HepG2 (cell line): ENCODE measurements at regions of chr12 and their contacts with region 1.

Region 1: DNA sequence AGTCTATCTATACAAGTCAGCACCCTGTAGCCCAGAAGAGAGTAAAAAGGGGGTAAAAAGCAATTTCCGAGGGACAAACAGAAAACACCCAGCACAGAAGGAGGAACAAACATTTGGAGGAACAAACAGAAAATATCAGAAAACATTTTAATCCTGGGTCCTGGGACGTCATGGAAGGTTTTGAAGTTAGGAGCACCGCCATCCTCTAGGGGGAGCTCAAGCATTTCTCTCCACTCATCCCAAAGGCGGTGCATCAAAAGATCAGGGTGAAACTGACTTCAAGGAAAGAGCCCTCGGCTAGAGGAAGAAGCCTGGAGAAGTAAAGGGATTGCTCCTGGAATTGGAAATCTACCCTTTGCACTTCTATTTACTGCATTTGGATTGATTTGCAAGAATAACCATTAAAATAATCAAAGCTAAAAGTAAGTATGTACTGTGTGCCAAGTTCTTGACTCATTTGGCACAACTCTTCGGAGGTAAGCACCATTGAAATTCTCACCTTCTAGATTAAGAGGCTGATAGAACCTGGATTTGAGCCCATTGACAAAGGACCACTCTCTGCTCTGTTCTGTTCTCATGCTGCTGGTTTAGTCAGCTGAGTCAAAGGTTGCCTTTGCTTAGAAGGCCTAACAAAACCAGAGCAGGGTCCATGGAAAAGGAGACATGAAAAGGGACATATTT is 17.2 kb upstream of the POC1B start:
- DNase-seq: peak; percentile 73
- ATAC-seq: peak; percentile 86
- H3K4me3 ChIP-seq: no peak overlapping the region
- H3K27ac ChIP-seq: no peak overlapping the region
- H3K4me1 ChIP-seq: peaks cover 23% of the 10 kb centered on the region
- H3K27me3 ChIP-seq: no peaks in the 10 kb centered on the region
- CTCF ChIP-seq: peak; percentile 87
- EP300 ChIP-seq: no peak
- POLR2A ChIP-seq: no peak
- RAD21 ChIP-seq: peak; percentile 84

Region 2: DNA sequence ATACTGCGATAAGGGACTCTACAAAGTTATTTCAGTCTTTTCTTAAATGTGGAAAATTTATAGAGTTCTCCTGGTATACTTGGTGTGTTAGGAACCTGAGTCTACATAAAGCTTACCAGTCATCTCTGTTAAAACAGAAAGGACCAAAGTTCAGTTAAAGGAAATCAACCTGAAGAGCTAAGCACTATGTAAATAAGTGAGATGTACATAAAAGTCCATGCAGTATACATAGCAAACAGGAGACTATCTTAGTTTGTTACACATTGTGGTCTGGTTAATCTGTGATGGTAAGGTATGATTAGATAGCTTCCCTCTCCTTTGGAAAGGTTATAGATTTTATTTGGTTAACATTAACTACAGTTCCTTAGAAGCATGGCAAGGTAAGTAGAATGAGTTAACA is 89.7 kb after region 1 on chr12:
- CTCF ChIA-PET with region 1: no interaction called
- POLR2A ChIA-PET with region 1: no interaction called
- in situ Hi-C with region 1: no loop called
- intact Hi-C with region 1: loop called (anchors 5 kb)
- DNase-seq: peak; percentile 96
- ATAC-seq: peak; percentile 99
- H3K4me3 ChIP-seq: peak overlapping the region in 2 of 3 experiments; percentile 36 to 42; a peak in 3 of 6 replicates
- H3K27ac ChIP-seq: peak overlapping the region; percentile 89
- H3K4me1 ChIP-seq: peaks cover 63% of the 10 kb centered on the region
- H3K27me3 ChIP-seq: no peaks in the 10 kb centered on the region
- CTCF ChIP-seq: no peak
- EP300 ChIP-seq: peak in 1 of 2 experiments; percentile 99; a peak in 3 of 4 replicates
- POLR2A ChIP-seq: no peak
- RAD21 ChIP-seq: no peak

Region 3: GRCh38 chr12:89709157-89709994 is 166.3 kb after region 1 on chr12:
- CTCF ChIA-PET with region 1: no interaction called
- POLR2A ChIA-PET with region 1: interaction called, 7 read pairs
- in situ Hi-C with region 1: loop called (anchors 10 kb)
- intact Hi-C with region 1: loop called (anchors 5 kb)
- DNase-seq: peak; percentile 94
- ATAC-seq: peak; percentile 80
- H3K4me3 ChIP-seq: peak overlapping the region; percentile 84 to 95 (median 95); a peak in 5 of 6 replicates
- H3K27ac ChIP-seq: peak overlapping the region; percentile 99
- H3K4me1 ChIP-seq: peaks cover 31% of the 10 kb centered on the region
- H3K27me3 ChIP-seq: no peaks in the 10 kb centered on the region; a peak in 1 of 5 replicates
- CTCF ChIP-seq: no peak
- EP300 ChIP-seq: no peak
- POLR2A ChIP-seq: peak; percentile 71 to 80
- RAD21 ChIP-seq: no peak; the same call in 1 of the 2 replicates

Region 4: GRCh38 chr12:90102957-90103652 is 560.1 kb after region 1 on chr12:
- CTCF ChIA-PET with region 1: interaction called, 12 read pairs
- POLR2A ChIA-PET with region 1: no interaction called
- in situ Hi-C with region 1: loop called (anchors 5 kb)
- intact Hi-C with region 1: loop called (anchors 1 kb)
- DNase-seq: peak; percentile 3
- ATAC-seq: peak; percentile 80
- H3K4me3 ChIP-seq: no peak overlapping the region
- H3K27ac ChIP-seq: no peak overlapping the region
- H3K4me1 ChIP-seq: no peaks in the 10 kb centered on the region
- H3K27me3 ChIP-seq: no peaks in the 10 kb centered on the region
- CTCF ChIP-seq: peak; percentile 41
- EP300 ChIP-seq: no peak
- POLR2A ChIP-seq: no peak
- RAD21 ChIP-seq: no peak

Region 5: GRCh38 chr12:90858252-90858651 is 1315.2 kb after region 1 on chr12:
- CTCF ChIA-PET with region 1: no interaction called
- POLR2A ChIA-PET with region 1: no interaction called
- in situ Hi-C with region 1: no loop called
- intact Hi-C with region 1: loop called (anchors 5 kb)
- DNase-seq: peak; percentile 83
- ATAC-seq: peak; percentile 99
- H3K4me3 ChIP-seq: peak overlapping the region in 1 of 3 experiments; percentile 0; a peak in 1 of 6 replicates
- H3K27ac ChIP-seq: peak overlapping the region; percentile 43
- H3K4me1 ChIP-seq: peaks cover 40% of the 10 kb centered on the region
- H3K27me3 ChIP-seq: no peaks in the 10 kb centered on the region; a peak in 1 of 5 replicates
- CTCF ChIP-seq: no peak
- EP300 ChIP-seq: peak in 1 of 2 experiments; percentile 68; a peak in 2 of 4 replicates
- POLR2A ChIP-seq: no peak
- RAD21 ChIP-seq: no peak

Region 6: DNA sequence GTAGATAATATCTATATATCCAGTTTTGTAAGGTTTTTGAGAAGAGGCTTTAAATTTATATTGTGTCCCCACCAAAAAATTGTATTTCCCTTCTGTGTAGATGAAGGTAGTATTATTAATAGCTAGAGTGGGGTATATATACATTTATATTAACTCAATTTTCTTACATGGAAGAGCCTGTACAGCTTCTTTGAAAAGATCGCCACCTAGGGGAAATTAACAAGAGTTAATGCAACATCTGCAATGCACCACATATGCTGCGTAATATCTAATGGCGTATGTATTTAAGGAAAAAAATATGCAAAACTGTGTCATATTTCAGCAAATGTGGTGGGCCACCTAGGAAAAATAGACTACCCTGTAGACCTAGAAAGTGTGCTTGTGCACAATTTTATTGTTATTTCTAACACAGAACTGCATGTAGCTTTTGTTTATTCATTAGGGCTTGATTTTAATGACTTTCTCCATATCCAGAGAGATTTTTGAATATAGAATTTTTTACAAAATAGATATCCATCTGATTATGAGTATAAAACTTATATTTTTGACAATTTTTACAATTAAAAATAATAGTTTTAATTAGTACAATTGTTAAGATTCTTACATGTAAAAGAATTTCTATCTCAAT is 1397.9 kb after region 1 on chr12:
- CTCF ChIA-PET with region 1: no interaction called
- POLR2A ChIA-PET with region 1: no interaction called
- in situ Hi-C with region 1: no loop called
- intact Hi-C with region 1: loop called (anchors 5 kb)
- DNase-seq: peak; percentile 28
- ATAC-seq: peak; percentile 79
- H3K4me3 ChIP-seq: no peak overlapping the region
- H3K27ac ChIP-seq: no peak overlapping the region
- H3K4me1 ChIP-seq: no peaks in the 10 kb centered on the region
- H3K27me3 ChIP-seq: no peaks in the 10 kb centered on the region
- CTCF ChIP-seq: peak; percentile 68
- EP300 ChIP-seq: no peak
- POLR2A ChIP-seq: no peak
- RAD21 ChIP-seq: no peak